ENCODE measurements at regions of chr12 and their contacts with region 1.

Region 1: DNA sequence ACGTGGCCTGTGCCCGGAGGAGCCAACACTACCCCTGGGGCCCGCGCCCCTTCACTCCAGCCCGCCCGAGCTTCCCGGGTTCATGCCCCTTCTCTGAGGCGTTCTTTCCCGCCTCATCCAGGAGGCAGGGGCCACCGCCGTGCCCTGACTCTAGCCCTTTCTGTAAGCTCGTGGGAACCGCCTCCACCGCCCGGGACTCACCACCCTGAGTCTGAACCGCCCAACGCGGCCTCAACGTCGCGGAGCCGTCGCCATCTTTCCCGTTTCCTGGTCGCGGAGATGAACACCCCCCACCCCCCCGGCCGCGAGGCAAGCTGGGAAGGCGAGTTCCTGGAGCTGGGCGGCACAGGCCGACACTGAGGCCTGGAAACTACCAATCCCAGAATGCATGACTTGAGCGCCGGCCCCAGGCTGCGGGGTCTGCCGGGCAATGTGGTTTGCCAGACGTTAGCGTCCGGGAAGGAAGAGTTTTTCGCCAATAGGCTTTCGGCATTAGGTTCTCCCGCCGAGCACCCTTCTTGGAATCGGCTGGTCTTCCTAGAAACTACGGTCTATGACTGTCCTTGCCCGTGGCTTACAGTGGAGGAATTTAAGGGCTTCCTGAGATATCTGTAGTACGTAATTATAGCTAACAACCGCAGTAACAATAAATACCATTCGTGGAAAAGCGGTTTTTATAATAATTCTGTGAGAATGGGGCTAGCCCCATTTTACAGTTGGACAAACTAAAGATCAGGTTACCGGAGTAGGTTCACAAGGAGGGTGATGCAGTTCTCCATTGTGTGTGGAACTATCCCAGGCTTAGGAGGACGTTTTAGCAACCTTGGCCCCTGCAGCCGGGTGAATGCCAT is at the start of gene DDX23:
- DNase-seq: peak; percentile 96
- H3K4me3 Mint-ChIP-seq: peak within 1 kb of the TSS; percentile 97
- H3K27ac Mint-ChIP-seq: peak within 1 kb of the TSS; percentile 91
- H3K4me1 Mint-ChIP-seq: peaks cover 44% of the 10 kb centered on the region
- H3K27me3 Mint-ChIP-seq: no peaks in the 10 kb centered on the region

Region 2: DNA sequence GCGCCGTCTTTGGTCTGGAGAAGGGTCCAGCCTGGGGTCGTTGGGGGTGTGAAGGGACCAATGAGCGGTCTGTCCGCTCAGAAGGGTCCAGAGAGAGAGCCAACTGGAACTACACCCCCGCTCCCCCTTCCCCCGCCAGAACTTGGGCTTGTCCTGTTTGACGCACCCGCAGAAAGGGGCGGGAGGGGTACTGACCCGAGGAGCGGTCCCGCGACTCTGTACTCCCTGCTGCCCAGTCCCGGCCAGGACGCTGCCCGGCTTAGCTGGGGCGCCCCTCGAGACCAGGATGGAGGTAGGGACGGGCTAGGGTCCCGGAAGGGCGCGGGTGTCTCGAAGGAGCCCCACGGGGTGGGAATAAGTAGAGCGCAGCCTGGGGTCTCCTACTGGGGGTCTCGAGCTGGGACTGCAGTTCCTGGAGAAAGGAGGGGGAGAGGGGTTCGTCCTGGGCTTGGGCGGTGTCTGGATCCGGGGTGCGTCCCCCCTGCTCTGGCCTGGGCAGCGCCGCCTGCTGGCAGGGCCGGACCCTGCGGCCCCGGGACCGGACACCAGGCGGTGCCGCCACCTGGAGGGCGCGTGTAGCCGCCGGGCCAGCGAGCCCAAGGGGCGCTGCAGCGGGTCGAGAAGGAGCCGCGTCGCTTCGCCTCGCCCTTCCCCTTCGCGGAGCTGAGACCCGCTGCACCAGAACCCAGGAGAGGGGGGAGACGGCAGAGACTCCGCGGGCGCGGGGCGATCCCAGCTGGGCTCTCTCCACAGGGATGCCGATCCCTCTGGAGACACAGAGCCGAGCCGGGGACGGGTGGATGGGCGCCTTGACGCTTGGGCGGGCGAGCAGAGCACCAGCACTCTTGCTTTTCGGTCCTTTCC is 37.6 kb before region 1 on chr12:
- CTCF ChIA-PET with region 1: interaction called, 17 read pairs
- DNase-seq: peak; percentile 83
- H3K4me3 Mint-ChIP-seq: peak overlapping the region; percentile 91
- H3K27ac Mint-ChIP-seq: peak overlapping the region; percentile 60
- H3K4me1 Mint-ChIP-seq: peaks cover 44% of the 10 kb centered on the region
- H3K27me3 Mint-ChIP-seq: peaks cover 84% of the 10 kb centered on the region

Region 3: DNA sequence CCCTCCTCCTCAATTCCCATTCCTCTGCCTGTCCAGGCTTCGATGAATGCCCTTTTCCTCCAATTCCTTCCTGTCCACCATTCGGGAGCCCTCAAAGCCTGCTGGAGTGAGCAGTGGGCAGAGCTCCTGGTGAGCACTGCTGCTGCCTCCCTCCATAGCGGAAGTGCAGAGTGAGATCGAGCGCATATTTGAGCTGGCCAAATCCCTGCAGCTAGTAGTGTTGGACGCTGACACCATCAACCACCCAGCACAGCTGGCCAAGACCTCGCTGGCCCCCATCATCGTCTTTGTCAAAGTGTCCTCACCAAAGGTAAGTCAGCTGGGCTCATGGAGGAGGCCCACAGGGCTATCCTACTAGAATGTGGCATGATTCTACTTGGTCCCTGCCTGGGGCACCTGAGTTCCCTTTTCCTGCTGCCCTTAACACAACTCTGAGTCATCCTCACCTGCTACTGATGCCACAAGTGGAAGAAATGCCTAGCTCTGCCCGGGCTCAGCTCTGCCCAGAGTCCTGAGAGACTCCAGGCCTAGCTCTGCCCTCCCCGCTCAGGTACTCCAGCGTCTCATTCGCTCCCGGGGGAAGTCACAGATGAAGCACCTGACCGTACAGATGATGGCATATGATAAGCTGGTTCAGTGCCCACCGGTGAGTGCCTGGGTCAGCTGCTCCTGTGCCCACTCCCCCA is 25.8 kb before region 1 on chr12:
- CTCF ChIA-PET with region 1: no interaction called
- DNase-seq: no peak
- H3K4me3 Mint-ChIP-seq: no peak overlapping the region
- H3K27ac Mint-ChIP-seq: no peak overlapping the region
- H3K4me1 Mint-ChIP-seq: no peaks in the 10 kb centered on the region
- H3K27me3 Mint-ChIP-seq: peaks cover 19% of the 10 kb centered on the region

Region 4: DNA sequence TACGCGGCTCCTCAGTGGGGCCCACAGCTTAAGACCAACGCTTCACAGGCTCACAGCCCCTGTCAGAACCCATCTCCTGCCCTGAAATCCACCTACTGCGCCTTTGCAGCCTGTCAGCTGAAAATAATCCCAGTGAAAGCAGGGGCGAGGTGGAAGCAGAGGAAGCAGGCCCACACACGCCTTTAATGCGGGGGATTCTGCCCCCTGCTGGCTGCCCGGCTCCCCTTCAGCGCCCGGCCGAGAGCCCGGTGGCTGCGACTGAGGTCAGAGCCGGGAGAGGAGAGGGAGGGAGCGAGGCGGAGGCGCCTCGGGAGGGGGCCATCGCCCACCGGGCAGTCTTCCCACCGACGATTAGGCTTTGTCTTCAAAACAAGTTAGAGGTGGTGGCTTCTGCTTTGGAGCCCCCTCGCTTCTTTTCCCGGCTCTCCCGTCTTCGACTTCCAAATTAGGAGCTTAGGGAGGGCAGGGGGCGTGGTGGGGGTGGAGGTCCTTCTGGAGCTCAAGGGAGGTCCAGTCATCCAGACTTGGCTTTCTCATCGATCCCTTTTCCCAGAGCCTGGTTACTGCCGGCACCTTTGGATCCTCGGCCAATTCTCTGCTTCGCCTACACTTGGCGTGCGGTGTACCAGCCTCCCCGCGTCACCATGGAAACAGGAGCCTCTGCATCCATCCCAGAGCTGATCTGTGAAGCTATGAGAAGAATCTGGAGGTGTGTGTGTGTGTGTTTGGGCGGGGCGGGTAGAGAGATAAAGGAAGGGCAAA is 38.7 kb after region 1 on chr12:
- CTCF ChIA-PET with region 1: interaction called, 173 read pairs
- DNase-seq: peak; percentile 85
- H3K4me3 Mint-ChIP-seq: no peak overlapping the region
- H3K27ac Mint-ChIP-seq: no peak overlapping the region
- H3K4me1 Mint-ChIP-seq: peaks cover 8% of the 10 kb centered on the region
- H3K27me3 Mint-ChIP-seq: peaks cover 46% of the 10 kb centered on the region

Region 5: GRCh38 chr12:48924617-48925303 is 72.7 kb after region 1 on chr12:
- CTCF ChIA-PET with region 1: interaction called, 15 read pairs
- DNase-seq: peak; percentile 80
- H3K4me3 Mint-ChIP-seq: peak overlapping the region; percentile 92
- H3K27ac Mint-ChIP-seq: peak overlapping the region; percentile 90
- H3K4me1 Mint-ChIP-seq: peaks cover 31% of the 10 kb centered on the region
- H3K27me3 Mint-ChIP-seq: peaks cover 4% of the 10 kb centered on the region

Region 6: GRCh38 chr12:48977315-48978281 is 125.5 kb after region 1 on chr12:
- CTCF ChIA-PET with region 1: interaction called, 37 read pairs
- DNase-seq: peak; percentile 83
- H3K4me3 Mint-ChIP-seq: peak overlapping the region; percentile 24
- H3K27ac Mint-ChIP-seq: no peak overlapping the region
- H3K4me1 Mint-ChIP-seq: peaks cover 51% of the 10 kb centered on the region
- H3K27me3 Mint-ChIP-seq: peaks cover 100% of the 10 kb centered on the region

Region 7: DNA sequence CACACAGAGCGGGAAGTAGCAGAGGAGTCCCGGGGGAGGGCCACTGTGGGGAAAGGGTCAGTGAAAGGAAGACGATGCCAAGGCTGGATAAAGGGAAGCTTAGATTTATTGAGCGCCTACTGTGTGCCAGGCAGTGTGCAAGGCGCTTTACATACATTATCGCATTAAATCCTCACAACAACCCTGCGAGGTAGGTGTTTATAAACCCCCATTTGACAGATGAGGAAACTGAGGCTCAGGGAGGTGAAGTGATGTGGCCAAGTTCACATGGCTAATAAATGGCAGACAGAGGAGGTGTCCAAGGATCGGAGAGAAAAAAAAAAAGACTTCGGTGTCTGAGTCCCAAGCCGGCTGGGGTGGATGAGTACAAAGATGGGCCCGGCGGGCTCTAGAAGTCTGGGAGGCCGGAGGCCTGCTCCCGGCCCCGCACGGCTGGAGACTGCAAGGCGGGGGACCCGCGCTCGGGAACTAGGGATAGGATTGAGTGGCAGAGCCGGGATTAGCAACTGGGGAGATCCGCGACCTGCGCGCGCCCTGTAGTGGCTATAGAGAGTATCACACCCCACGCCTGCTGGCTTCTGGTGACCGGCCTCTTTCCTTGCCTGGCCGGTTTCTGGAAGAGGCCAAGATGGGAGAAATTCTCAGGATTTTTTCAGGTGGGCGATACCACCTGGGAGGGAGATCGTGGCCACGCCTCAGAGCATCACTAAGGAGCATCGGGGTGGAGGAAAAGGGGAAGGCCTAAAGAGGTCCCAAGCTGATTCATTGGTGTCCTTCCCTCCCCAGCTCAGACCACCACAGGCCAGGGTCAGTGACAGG is 143.2 kb after region 1 on chr12:
- CTCF ChIA-PET with region 1: interaction called, 14 read pairs
- DNase-seq: peak; percentile 67
- H3K4me3 Mint-ChIP-seq: peak overlapping the region; percentile 13
- H3K27ac Mint-ChIP-seq: no peak overlapping the region
- H3K4me1 Mint-ChIP-seq: peaks cover 32% of the 10 kb centered on the region
- H3K27me3 Mint-ChIP-seq: peaks cover 95% of the 10 kb centered on the region